ENCODE measurements at regions of chr1 and their contacts with region 1.

Region 1: DNA sequence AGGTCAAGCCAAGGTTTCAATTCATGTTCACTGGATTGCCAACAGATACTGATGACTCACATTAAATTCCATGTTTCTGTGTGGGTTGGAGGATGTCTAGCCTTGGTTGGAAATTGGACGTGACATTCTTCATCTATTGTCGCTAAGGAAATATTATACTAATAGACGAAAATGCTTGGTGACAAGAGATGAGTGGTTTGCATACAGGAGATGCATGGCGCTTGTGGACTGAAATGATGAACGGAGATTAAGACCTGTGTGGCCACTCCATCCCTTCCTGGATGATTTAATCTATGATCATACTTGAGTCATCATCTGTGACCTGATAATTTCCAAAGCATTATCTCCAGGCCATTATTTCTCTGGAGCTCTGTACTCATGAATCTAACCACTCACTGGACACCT is 97.0 kb upstream of the CD34 start:
- DNase-seq: no peak
- H3K4me3 Mint-ChIP-seq: no peak overlapping the region
- H3K27ac Mint-ChIP-seq: no peak overlapping the region
- H3K4me1 Mint-ChIP-seq: no peaks in the 10 kb centered on the region
- H3K27me3 Mint-ChIP-seq: no peaks in the 10 kb centered on the region

Region 2: GRCh38 chr1:207997486-207998268 is 10.3 kb before region 1 on chr1:
- CTCF ChIA-PET with region 1: interaction called, 16 read pairs
- intact Hi-C with region 1: no loop called
- DNase-seq: peak; percentile 74
- H3K4me3 Mint-ChIP-seq: no peak overlapping the region
- H3K27ac Mint-ChIP-seq: no peak overlapping the region
- H3K4me1 Mint-ChIP-seq: no peaks in the 10 kb centered on the region
- H3K27me3 Mint-ChIP-seq: no peaks in the 10 kb centered on the region

Measured in activated naive CD4-positive, alpha-beta T cell treated with anti-CD3 and anti-CD28 coated beads for 36 hours (primary cell).